ENCODE measurements at regions of chr1 and their contacts with region 1.

Region 1: DNA sequence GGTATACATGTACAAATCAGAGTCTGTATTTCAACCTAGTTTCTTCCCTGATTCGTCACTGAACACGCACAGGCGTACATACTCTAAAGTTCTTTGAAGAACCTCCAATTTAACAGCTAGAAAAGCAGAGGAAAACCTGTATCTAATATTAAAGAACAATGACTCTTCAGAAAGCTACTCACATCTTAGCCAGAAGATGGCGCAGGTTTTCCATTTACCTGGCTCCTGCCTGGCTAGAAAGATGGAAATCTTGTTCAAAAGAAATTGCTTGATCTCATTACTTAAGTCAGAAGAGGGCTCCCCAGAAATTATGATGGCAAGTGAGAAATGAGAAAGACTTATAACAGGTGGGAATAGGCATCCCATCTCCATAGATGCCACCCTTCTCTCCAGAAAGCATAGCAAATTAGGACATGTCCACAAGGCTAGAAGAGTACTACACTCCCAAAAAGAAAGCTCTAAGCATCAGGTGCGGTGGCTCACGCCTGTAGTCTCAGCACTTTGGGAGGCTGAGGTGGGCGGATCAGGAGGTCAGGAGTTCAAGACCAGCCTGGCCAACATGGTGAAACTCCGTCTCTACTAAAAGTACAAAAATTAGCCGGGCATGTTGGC is 19.0 kb upstream of the L1TD1 start:
- DNase-seq: no peak

Region 2: GRCh38 chr1:61757945-61758344 is 417.7 kb before region 1 on chr1:
- intact Hi-C with region 1: no loop called
- DNase-seq: no peak

Region 3: DNA sequence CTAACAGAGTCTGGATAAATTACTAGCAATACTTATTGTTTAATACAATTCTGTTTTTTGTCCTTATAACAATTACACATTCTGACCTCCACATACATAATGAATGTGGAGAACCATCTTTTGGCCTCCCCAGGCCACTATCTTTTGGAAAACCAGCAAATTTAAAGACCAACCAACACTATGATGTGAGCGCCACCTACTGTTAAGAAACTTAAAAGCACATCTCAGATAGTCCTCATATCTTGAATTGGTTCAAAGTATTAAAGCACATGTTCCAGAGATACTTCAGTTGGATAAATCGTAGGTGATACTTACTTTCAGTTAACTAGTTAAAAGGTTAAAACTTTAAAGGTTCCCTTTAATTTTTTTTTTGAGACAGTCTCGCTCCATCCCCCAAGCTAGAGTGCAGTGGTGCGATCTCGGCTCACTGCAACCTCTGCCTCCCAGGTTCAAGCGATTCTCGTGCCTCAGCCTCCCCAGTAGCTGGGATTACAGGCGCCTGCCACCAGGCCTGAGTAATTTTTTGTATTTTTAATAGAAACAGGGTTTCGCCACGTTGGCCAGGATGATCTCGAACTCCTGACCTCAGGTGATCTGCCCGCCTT is 231.8 kb after region 1 on chr1:
- intact Hi-C with region 1: loop called (anchors 1 kb)
- DNase-seq: no peak

Region 4: DNA sequence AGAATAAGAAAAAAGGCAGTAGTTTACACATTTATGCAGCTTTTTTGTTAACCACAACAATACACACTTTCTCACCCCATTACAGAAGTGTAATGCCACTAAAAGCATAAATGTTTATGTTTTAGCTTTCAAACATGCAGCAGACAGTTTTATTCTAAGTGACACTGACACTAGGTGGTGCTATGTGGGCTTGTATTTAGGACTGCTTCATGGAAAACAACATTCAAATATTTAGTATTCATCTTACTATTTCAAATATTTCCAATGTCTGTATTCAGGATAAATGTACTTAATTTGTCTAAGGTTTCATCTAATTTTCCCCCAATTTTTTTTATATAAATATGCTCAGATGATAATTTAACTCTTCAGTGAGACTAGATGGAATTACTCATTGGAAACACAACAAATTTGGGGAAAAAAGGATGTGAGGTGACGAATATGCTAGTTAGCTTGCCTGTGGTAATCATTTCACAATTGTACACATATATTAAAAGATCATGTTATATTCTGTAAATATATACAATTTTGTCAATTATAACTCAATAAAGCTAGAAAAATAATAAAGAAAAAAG is 332.6 kb after region 1 on chr1:
- intact Hi-C with region 1: no loop called
- DNase-seq: no peak

Measured in cardiac septum (tissue), 1 donor.